CD4-positive, alpha-beta T cell (primary cell): ENCODE measurements at regions of chr3 and their contacts with region 1.

Region 1: DNA sequence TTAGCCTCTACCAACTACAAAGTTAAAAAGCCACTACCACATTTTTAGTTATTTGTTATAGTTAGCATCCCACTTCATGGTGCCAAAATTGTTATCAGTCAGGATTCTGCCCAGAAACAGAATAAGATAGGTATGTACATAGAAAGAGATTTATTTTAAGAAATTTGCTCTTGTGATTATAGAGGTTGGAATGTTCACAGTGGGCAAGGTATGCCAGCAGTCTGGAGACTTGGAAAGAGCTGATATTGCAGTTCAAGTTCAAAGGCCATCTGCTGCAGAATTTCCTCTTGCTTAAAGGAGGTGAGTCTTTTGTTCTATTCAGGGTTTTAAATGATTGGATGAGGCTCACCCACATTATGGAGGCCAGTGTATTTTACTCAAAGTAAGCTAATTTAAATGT is 143.8 kb upstream of the POU1F1 start:
- DNase-seq: no peak
- ATAC-seq: no peak
- H3K4me3 ChIP-seq: no peak overlapping the region
- H3K4me3 Mint-ChIP-seq: no peak overlapping the region
- H3K27ac ChIP-seq: no peak overlapping the region
- H3K27ac Mint-ChIP-seq: no peak overlapping the region
- H3K4me1 ChIP-seq: no peaks in the 10 kb centered on the region
- H3K4me1 Mint-ChIP-seq: no peaks in the 10 kb centered on the region
- H3K27me3 ChIP-seq: no peaks in the 10 kb centered on the region
- H3K27me3 Mint-ChIP-seq: no peaks in the 10 kb centered on the region
- CTCF ChIP-seq: no peak

Region 2: DNA sequence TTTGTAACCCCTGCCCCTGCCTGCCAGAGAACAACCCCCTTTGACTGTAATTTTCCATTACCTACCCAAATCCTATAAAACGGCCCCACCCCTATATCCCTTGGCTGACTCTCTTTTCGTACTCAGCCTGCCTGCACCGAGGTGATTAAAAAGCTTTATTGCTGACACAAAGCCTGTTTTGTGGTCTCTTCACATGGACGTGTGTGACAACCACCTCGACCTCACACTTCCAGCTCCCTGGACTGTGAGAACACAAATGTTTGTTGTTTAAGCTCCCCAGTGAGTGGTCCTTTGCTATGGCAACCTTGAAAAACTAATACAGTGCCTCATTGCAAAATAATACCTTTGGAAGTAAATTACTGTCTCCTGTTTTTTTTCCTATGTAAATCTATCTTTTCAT is 155.4 kb after region 1 on chr3:
- CTCF ChIA-PET with region 1: no interaction called
- POLR2A ChIA-PET with region 1: no interaction called
- intact Hi-C with region 1: loop called in 1 of 2 experiments (anchors 5 kb)
- DNase-seq: no peak
- ATAC-seq: no peak
- H3K4me3 ChIP-seq: no peak overlapping the region
- H3K4me3 Mint-ChIP-seq: no peak overlapping the region
- H3K27ac ChIP-seq: no peak overlapping the region
- H3K27ac Mint-ChIP-seq: no peak overlapping the region
- H3K4me1 ChIP-seq: no peaks in the 10 kb centered on the region
- H3K4me1 Mint-ChIP-seq: no peaks in the 10 kb centered on the region
- H3K27me3 ChIP-seq: no peaks in the 10 kb centered on the region
- H3K27me3 Mint-ChIP-seq: no peaks in the 10 kb centered on the region
- CTCF ChIP-seq: no peak